Activated B cell treated with CpG ODN at 0.5 μM for 24 hours (primary cell): ENCODE measurements at regions of chr6 and their contacts with region 1.

Region 1: DNA sequence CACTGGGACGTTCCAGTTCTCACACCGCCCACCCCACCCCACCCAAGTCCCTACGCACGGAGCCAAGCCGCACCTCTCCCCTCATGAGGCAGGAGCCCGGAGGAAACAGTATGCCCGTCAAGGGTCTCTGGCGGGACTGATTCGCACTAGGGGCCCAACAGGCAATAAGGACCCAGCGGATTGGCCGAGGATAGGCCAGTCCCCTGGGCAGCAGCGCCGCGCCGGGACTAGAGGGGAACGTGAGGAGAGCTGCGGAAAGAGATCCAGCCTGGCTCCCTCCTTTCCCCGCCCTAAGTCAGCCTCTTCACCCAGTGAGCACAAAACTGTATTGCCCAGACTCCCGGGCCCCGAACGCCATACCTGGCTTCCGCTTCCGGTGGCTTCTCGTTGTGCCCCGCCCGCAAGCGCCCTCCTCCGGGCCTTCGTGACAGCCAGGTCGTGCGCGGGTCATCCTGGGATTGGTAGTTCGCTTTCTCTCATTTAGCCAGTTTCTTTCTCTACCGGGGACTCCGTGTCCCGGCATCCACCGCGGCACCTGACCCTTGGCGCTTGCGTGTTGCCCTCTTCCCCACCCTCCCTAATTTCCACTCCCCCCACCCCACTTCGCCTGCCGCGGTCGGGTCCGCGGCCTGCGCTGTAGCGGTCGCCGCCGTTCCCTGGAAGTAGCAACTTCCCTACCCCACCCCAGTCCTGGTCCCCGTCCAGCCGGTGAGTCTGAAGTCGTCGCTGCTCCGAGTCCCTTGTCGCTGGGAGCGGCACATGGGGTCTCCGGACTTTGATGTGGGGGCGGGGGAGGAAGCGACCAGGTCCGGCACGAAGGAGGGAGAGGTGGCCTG is at the start of gene CSNK2B:
- DNase-seq: peak; percentile 91
- ATAC-seq: peak; percentile 86
- H3K4me3 Mint-ChIP-seq: peak within 1 kb of the TSS; percentile 96
- H3K27ac Mint-ChIP-seq: peak within 1 kb of the TSS; percentile 95
- H3K4me1 Mint-ChIP-seq: peaks cover 61% of the 10 kb centered on the region
- H3K27me3 Mint-ChIP-seq: no peaks in the 10 kb centered on the region
- CTCF ChIP-seq: no peak
- total RNA-seq, gene CSNK2B: 190 and 191 TPM in 2 replicates

Region 2: DNA sequence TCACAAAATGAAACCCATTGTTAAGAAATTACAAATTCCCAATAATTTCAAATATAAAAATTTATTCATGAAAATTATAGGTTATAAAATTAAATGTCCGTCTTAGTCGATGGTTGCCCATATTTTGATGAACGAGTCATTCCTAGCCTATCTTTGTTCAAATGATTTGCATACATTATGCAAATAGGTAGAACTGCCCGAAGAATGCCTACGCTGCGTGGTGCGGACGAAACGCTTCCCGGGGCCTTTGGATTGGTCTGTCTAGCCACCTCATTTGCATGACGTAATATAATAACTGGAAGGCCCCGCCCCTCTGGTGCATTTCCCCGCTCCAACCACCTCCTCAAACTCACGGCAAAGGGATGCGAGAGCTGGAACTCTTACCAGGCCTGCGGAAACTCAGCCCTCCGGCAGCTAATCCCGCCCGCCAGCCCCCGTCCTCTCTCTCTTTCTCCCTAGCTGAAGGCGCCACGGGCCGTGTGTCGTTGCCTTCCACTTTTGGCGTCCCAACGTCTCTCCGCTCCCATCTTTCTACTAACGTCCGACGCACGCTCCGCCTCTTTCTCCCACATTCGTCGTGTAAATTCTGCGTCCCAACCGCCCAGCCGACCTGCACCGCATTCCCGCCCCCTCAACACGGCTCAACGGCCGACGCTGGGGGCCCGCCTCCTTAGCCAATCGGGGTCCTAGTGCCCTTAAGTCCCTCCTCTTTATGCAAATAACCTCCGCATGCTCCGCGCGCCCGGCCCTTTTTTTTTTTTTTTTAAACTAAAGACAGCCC is 45.7 kb before region 1 on chr6:
- CTCF ChIA-PET with region 1: no interaction called
- POLR2A ChIA-PET with region 1: interaction called, 16 read pairs
- intact Hi-C with region 1: loop called (anchors 1 kb)
- DNase-seq: peak; percentile 87
- ATAC-seq: peak; percentile 84
- H3K4me3 Mint-ChIP-seq: peak overlapping the region; percentile 86
- H3K27ac Mint-ChIP-seq: peak overlapping the region; percentile 94
- H3K4me1 Mint-ChIP-seq: peaks cover 46% of the 10 kb centered on the region
- H3K27me3 Mint-ChIP-seq: no peaks in the 10 kb centered on the region
- CTCF ChIP-seq: no peak

Region 3: DNA sequence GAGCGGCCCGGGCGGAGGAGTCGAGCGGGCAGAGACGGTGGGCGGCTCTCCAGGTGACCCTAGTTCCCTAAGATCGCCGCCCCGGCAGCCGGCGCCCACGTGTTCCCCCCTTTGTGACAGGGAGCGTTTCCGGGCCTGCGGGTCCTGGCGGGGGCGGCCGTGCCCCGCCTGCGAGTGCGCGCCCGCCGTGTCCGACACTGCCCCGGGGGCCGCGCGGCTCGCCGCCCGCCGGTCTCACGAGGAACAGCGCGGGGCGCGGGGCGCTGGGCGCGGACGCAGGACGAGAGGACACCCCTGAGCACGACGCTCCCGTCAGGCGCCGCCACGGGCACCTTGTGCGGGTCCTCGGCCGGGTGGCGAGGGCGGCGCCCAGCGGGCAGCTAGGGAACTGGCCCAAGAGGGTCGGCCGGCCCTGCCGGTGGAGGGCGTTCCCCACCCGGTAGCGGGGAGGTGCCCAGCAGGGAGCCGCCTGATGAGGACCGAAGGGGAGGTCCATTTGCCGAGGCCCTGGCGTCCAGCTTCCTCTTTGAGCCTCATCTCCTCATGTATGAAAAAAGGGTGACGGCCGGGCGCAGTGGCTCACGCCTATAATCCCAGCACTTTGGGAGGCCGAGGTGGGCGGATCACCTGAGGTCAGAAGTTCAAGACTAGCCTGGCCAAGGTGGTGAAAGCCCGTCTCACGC is 130.0 kb after region 1 on chr6 and contains the start of gene VARS1:
- CTCF ChIA-PET with region 1: no interaction called
- POLR2A ChIA-PET with region 1: interaction called, 10 read pairs
- intact Hi-C with region 1: loop called (anchors 1 kb)
- DNase-seq: peak; percentile 89
- ATAC-seq: peak; percentile 89
- H3K4me3 Mint-ChIP-seq: peak within 1 kb of the TSS; percentile 98
- H3K27ac Mint-ChIP-seq: peak within 1 kb of the TSS; percentile 98
- H3K4me1 Mint-ChIP-seq: peaks cover 65% of the 10 kb centered on the region
- H3K27me3 Mint-ChIP-seq: no peaks in the 10 kb centered on the region
- CTCF ChIP-seq: no peak
- total RNA-seq, gene VARS1: 136 and 140 TPM in 2 replicates

Region 4: DNA sequence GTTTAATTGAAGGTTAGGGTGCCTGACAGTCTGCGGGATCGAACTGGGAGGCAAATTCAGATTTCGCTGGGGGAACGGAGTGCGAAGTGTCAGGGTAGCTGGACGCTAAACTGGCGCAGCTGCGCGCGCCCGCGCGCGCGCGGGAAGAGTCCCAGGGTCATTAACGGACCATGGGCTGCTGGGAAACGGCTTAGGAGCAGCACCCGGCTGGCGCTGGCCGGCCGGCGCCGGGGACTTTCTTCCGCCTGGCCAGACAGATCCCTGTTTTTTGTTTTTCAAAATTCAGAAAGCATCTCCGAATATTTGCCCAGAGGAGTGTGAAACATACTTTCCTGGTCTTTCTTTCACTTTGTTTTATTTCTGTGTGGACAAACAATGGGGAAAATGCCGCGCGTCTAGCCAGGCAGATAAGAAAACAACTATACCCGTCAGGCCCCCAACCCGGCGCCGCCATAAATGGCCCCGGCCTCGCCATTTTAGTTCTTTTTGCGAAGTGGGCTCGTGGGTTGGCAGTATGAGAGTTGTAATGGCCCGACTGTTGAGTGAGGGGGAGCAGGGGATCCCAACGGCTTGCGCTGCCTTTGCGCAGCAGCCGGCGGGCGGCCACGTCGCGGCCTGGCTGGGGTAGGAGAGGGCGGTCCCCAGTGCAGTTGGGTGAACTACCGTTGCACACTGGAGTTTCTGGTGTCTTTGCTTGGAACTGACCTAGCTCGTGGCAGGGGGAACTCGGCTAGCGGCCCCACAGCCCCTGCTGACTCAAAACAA is 168.9 kb after region 1 on chr6:
- CTCF ChIA-PET with region 1: interaction called, 3 read pairs
- POLR2A ChIA-PET with region 1: interaction called, 15 read pairs
- intact Hi-C with region 1: loop called (anchors 1 kb)
- DNase-seq: peak; percentile 75
- ATAC-seq: peak; percentile 62
- H3K4me3 Mint-ChIP-seq: peak overlapping the region; percentile 99
- H3K27ac Mint-ChIP-seq: peak overlapping the region; percentile 98
- H3K4me1 Mint-ChIP-seq: peaks cover 71% of the 10 kb centered on the region
- H3K27me3 Mint-ChIP-seq: no peaks in the 10 kb centered on the region
- CTCF ChIP-seq: no peak

Region 5: DNA sequence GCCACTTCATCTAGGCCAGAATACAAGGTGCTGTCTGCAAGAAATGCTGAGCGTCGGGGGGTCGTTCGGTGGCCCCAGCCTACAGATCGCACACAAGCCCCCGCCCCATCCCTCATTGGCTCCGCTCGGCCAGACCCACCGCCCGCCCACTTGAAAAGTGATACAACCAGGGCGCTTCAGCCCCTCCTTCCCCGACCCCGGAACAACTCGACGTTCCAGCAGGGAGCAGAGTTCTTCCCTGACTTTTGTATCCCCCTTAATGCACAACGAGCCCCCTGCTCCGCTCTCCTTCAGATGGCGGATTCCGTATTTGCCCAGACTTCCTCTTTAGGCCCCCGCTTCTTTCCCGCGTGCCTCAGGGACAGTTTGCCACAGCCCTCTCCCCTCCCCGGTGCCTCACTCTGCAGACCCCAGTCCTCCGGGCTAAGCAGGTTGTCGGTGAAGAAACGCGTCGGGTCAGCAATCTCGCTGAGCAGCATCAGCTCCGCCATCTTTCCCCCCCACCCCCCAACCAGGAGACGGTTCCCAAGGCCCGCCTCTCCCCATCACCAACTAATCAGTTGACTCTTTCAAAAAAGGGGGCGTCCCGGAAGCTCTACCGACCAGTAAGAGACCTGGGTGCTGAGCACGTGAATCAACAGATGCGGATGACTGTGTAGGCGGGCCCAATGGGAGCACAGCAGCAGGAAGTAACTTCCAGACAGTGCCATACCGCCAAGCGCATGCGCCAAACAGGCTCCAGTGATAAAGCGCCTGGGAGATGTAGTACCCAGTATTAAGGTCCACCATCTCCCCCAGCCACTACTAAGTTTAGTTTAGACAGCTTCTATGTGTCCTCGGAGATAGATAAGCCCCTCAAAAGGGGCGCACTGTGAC is 462.2 kb after region 1 on chr6 and contains the start of gene ATF6B:
- CTCF ChIA-PET with region 1: no interaction called
- POLR2A ChIA-PET with region 1: no interaction called
- intact Hi-C with region 1: loop called (anchors 5 kb)
- DNase-seq: peak; percentile 81
- ATAC-seq: peak; percentile 92
- H3K4me3 Mint-ChIP-seq: peak within 1 kb of the TSS; percentile 99
- H3K27ac Mint-ChIP-seq: peak within 1 kb of the TSS; percentile 95
- H3K4me1 Mint-ChIP-seq: peaks cover 53% of the 10 kb centered on the region
- H3K27me3 Mint-ChIP-seq: no peaks in the 10 kb centered on the region
- CTCF ChIP-seq: no peak
- total RNA-seq, gene ATF6B: 144 and 148 TPM in 2 replicates